ENCODE measurements at regions of chr6 and their contacts with region 1.

Region 1: DNA sequence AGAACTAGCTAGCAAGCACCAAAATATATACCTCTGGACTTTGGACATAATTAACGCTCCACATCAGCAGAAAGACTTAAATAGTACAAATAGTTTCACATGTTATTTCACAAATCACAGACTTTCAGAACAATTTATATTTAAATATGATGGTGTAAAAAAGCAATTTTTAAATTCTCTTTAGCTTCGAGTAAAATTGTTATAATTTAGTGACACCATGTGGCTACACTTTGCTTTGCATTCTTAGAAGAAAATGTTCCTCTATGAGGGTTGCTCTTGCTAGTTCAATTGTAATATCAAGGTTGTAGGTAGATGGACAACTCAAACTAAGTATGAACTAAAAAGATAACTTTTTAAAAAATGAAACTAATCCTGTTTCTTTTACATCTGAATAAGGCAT is 69.0 kb downstream of the BTBD9 start:
- DNase-seq: no peak
- H3K4me3 Mint-ChIP-seq: no peak overlapping the region
- H3K27ac Mint-ChIP-seq: no peak overlapping the region
- H3K4me1 Mint-ChIP-seq: peaks cover 24% of the 10 kb centered on the region
- H3K27me3 Mint-ChIP-seq: no peaks in the 10 kb centered on the region

Region 2: GRCh38 chr6:38057994-38058393 is 512.8 kb before region 1 on chr6:
- intact Hi-C with region 1: loop called (anchors 10 kb)
- DNase-seq: peak; percentile 60
- H3K4me3 Mint-ChIP-seq: no peak overlapping the region
- H3K27ac Mint-ChIP-seq: no peak overlapping the region
- H3K4me1 Mint-ChIP-seq: peaks cover 13% of the 10 kb centered on the region
- H3K27me3 Mint-ChIP-seq: no peaks in the 10 kb centered on the region